Activated CD4-positive, alpha-beta memory T cell treated with anti-CD3 and anti-CD28 coated beads for 36 hours (primary cell): ENCODE measurements at regions of chr2 and their contacts with region 1.

Region 1: DNA sequence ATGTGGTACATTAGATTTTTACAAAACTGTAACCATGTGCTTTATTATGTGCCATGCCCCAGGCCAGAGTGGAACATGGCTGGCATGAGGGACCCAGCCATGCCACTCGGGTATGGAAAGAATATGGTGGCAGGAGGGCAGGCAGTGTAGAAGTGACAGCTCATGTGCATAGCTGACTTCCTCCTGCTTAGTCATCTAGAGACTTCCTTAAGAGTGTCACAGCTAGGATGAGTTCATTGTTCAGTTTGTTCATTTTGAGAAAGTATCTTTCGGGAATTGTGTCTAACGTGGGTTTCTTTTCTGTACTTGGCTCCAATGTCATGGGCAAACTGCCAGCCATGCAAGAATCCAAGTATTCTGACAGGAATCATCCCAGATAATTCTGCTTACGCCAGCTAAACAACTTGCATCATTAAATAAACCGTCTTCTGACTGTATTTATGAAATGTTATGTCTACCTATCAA is 94.3 kb upstream of the ITGB6 start:
- DNase-seq: peak; percentile 68
- H3K4me3 Mint-ChIP-seq: no peak overlapping the region
- H3K27ac Mint-ChIP-seq: peak overlapping the region; percentile 18
- H3K4me1 Mint-ChIP-seq: peaks cover 76% of the 10 kb centered on the region
- H3K27me3 Mint-ChIP-seq: no peaks in the 10 kb centered on the region

Region 2: GRCh38 chr2:160043265-160043664 is 251.1 kb before region 1 on chr2:
- CTCF ChIA-PET with region 1: no interaction called
- POLR2A ChIA-PET with region 1: no interaction called
- intact Hi-C with region 1: loop called (anchors 1 kb)
- DNase-seq: no peak
- H3K4me3 Mint-ChIP-seq: no peak overlapping the region
- H3K27ac Mint-ChIP-seq: no peak overlapping the region
- H3K4me1 Mint-ChIP-seq: peaks cover 15% of the 10 kb centered on the region
- H3K27me3 Mint-ChIP-seq: peaks cover 10% of the 10 kb centered on the region

Region 3: GRCh38 chr2:160278879-160279177 is 15.5 kb before region 1 on chr2:
- CTCF ChIA-PET with region 1: interaction called, 5 read pairs
- POLR2A ChIA-PET with region 1: interaction called, 3 read pairs
- intact Hi-C with region 1: loop called (anchors 2 kb)
- DNase-seq: no peak
- H3K4me3 Mint-ChIP-seq: no peak overlapping the region
- H3K27ac Mint-ChIP-seq: no peak overlapping the region
- H3K4me1 Mint-ChIP-seq: peaks cover 23% of the 10 kb centered on the region
- H3K27me3 Mint-ChIP-seq: no peaks in the 10 kb centered on the region